CD4-positive, alpha-beta memory T cell (primary cell): ENCODE measurements at regions of chr1 and their contacts with region 1.

Region 1: GRCh38 chr1:247390116-247390791 is 25.7 kb upstream of the NLRP3 start:
- DNase-seq: peak; percentile 84 to 89 (median 86)
- H3K4me3 ChIP-seq: peak overlapping the region in 1 of 2 donors; percentile 34
- H3K4me3 Mint-ChIP-seq: peak overlapping the region; percentile 71 to 88 (median 77)
- H3K27ac ChIP-seq: peak overlapping the region; percentile 36
- H3K27ac Mint-ChIP-seq: peak overlapping the region; percentile 59 to 93 (median 90)
- H3K4me1 ChIP-seq: peaks cover 17% of the 10 kb centered on the region
- H3K4me1 Mint-ChIP-seq: peaks cover 7 to 14% (median 8%) of the 10 kb centered on the region in 4 donors
- H3K27me3 ChIP-seq: no peaks in the 10 kb centered on the region
- H3K27me3 Mint-ChIP-seq: no peaks in the 10 kb centered on the region

Region 2: DNA sequence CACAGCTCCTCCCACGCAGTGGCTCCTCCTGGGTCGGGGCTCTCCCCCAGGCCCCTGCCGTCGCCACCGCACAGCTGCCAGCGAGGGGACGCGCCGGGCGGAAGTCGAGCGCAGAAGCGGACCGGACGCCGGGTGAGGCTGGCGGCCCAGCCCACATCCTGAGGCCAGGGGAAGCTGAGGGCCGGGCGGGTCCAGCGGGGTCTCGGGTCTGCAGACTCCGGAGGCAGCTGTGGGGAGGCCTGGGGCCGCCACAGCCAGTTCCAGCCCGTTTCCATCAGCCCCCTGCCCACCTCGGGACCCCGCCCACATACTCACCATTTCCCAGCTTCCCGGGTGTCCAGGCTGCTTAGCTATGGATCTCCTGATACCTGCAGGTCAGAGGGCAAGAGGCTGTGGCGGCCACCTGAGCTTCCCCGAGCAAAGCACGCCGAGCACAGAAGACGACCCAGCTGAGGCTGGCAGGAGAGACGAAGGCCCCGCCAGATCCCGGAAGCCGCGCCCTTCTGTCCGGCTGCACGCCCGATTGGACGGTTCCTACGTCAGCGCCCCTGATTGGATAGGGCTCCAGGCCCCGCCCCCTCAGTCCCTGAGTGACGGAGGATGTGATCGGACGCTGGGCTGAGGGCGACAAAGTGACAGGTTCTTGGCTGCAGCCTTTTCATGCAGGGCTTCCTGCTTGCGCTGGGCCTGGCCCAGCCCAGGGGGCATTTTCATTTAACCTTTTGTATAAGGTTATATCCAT is 179.7 kb before region 1 on chr1:
- CTCF ChIA-PET with region 1: interaction called, 5 read pairs
- POLR2A ChIA-PET with region 1: interaction called, 3 read pairs
- intact Hi-C with region 1: loop called (anchors 10 kb)
- DNase-seq: peak; percentile 91 to 93 (median 92)
- H3K4me3 ChIP-seq: peak overlapping the region; percentile 66 to 70
- H3K4me3 Mint-ChIP-seq: peak overlapping the region; percentile 94 to 97 (median 95)
- H3K27ac ChIP-seq: peak overlapping the region; percentile 76
- H3K27ac Mint-ChIP-seq: peak overlapping the region; percentile 95 to 97 (median 95)
- H3K4me1 ChIP-seq: peaks cover 70% of the 10 kb centered on the region
- H3K4me1 Mint-ChIP-seq: peaks cover 50 to 74% (median 64%) of the 10 kb centered on the region in 4 donors
- H3K27me3 ChIP-seq: no peaks in the 10 kb centered on the region
- H3K27me3 Mint-ChIP-seq: no peaks in the 10 kb centered on the region

Region 3: GRCh38 chr1:247401310-247402119 is 11.3 kb after region 1 on chr1:
- CTCF ChIA-PET with region 1: interaction called, 15 read pairs
- POLR2A ChIA-PET with region 1: interaction called, 3 read pairs
- intact Hi-C with region 1: no loop called
- DNase-seq: no peak
- H3K4me3 ChIP-seq: no peak overlapping the region
- H3K4me3 Mint-ChIP-seq: no peak overlapping the region
- H3K27ac ChIP-seq: no peak overlapping the region
- H3K27ac Mint-ChIP-seq: no peak overlapping the region
- H3K4me1 ChIP-seq: peaks cover 3% of the 10 kb centered on the region
- H3K4me1 Mint-ChIP-seq: peaks cover under 1 to 10% (median 5%) of the 10 kb centered on the region in 4 donors
- H3K27me3 ChIP-seq: no peaks in the 10 kb centered on the region
- H3K27me3 Mint-ChIP-seq: peaks cover 2 to 6% of the 10 kb centered on the region in 2 donors

Region 4: DNA sequence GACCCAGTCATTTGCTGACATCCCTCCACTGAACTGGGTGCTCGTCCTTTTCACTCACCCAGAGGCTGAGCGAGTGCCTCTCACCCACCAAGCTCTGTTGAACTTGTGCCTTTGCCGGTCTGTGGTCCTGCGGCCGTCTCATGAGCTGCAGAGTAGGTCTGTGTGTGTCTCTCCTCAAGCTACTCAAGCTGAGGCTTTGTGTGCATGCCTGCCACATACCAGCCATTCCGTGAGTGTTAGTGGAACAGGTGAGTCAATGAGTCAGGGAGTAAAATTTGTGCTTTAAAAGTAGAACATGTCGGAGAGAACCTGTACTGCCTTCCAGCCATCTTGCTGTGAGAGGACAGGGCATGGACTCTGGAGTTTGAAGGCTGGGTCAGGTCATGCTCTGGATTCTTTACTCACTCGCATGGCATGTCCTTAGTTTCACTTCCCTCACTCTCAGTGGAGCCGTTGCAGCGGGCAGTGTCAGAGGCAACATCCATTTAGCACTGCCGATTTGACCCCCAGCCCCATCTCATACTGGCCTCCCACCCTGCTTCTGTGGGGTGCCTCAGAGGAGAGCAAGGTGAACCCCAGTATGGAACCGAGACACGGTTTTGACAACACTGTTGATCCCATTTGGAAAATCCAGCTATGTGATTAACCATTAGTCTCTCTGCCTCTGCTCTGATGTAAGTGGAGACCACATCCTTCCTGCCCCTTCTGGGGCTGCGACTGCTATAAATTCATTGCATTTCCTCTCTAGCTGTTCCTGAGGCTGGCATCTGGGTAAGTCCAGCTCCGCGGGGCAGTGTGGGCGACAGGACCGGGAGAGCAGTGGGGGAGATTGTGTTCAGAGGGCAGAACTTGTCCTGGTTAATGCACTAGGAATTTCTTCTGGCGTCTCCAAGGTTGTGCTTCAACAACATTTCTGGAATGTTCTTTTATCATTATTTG is 25.4 kb after region 1 on chr1 and contains the start of gene NLRP3:
- CTCF ChIA-PET with region 1: interaction called, 104 read pairs
- POLR2A ChIA-PET with region 1: interaction called, 50 read pairs
- intact Hi-C with region 1: loop called (anchors 1 kb)
- DNase-seq: peak; percentile 43 to 72 (median 60)
- H3K4me3 ChIP-seq: peak within 1 kb of the TSS; percentile 64 to 70
- H3K4me3 Mint-ChIP-seq: peak within 1 kb of the TSS; percentile 90 to 98 (median 93)
- H3K27ac ChIP-seq: peak within 1 kb of the TSS; percentile 64
- H3K27ac Mint-ChIP-seq: peak within 1 kb of the TSS; percentile 85 to 95 (median 92)
- H3K4me1 ChIP-seq: peaks cover 53% of the 10 kb centered on the region
- H3K4me1 Mint-ChIP-seq: peaks cover 39 to 61% (median 46%) of the 10 kb centered on the region in 4 donors
- H3K27me3 ChIP-seq: no peaks in the 10 kb centered on the region
- H3K27me3 Mint-ChIP-seq: no peaks in the 10 kb centered on the region
- total RNA-seq, gene NLRP3: 13.8 to 14.6 TPM

Region 5: DNA sequence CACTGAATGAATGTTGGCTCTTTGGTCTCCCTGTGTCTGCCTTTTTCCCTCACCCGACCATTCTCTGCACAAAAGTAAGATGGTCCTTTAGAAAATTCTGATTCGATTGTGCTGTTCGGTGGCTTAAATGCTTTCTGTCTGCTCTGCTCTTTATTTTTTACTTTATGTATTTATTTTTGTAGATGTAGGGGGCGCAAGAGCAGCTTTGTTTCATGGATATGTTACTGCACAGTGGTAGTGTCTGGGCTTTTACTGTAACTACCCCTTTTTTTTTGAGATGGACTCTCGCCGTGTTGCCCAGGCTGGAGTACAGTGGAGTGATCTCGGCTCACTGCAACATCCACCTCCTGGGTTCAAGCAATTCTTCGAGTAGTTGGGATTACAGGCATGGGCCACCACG is 41.4 kb after region 1 on chr1:
- CTCF ChIA-PET with region 1: interaction called, 11 read pairs
- POLR2A ChIA-PET with region 1: interaction called, 7 read pairs
- intact Hi-C with region 1: no loop called
- DNase-seq: no peak
- H3K4me3 ChIP-seq: no peak overlapping the region
- H3K4me3 Mint-ChIP-seq: no peak overlapping the region
- H3K27ac ChIP-seq: no peak overlapping the region
- H3K27ac Mint-ChIP-seq: peak overlapping the region in 2 of 7 donors; percentile 11 to 63
- H3K4me1 ChIP-seq: no peaks in the 10 kb centered on the region
- H3K4me1 Mint-ChIP-seq: peaks cover 7 to 16% (median 13%) of the 10 kb centered on the region in 4 donors
- H3K27me3 ChIP-seq: no peaks in the 10 kb centered on the region
- H3K27me3 Mint-ChIP-seq: no peaks in the 10 kb centered on the region

Region 6: GRCh38 chr1:247456914-247457639 is 66.8 kb after region 1 on chr1:
- CTCF ChIA-PET with region 1: interaction called, 10 read pairs
- POLR2A ChIA-PET with region 1: no interaction called
- intact Hi-C with region 1: no loop called
- DNase-seq: no peak
- H3K4me3 ChIP-seq: no peak overlapping the region
- H3K4me3 Mint-ChIP-seq: no peak overlapping the region
- H3K27ac ChIP-seq: no peak overlapping the region
- H3K27ac Mint-ChIP-seq: peak overlapping the region in 4 of 7 donors; percentile 3 to 51 (median 26)
- H3K4me1 ChIP-seq: no peaks in the 10 kb centered on the region
- H3K4me1 Mint-ChIP-seq: peaks cover 0 to 9% (median 3%) of the 10 kb centered on the region in 4 donors
- H3K27me3 ChIP-seq: no peaks in the 10 kb centered on the region
- H3K27me3 Mint-ChIP-seq: peaks cover 9 to 11% of the 10 kb centered on the region in 2 donors

Region 7: GRCh38 chr1:247681288-247681897 is 291.1 kb after region 1 on chr1:
- CTCF ChIA-PET with region 1: no interaction called
- POLR2A ChIA-PET with region 1: no interaction called
- intact Hi-C with region 1: no loop called
- DNase-seq: peak in 3 of 5 donors; percentile 5 to 8 (median 5)
- H3K4me3 ChIP-seq: no peak overlapping the region
- H3K4me3 Mint-ChIP-seq: no peak overlapping the region
- H3K27ac ChIP-seq: no peak overlapping the region
- H3K27ac Mint-ChIP-seq: no peak overlapping the region
- H3K4me1 ChIP-seq: no peaks in the 10 kb centered on the region
- H3K4me1 Mint-ChIP-seq: no peaks in the 10 kb centered on the region
- H3K27me3 ChIP-seq: no peaks in the 10 kb centered on the region
- H3K27me3 Mint-ChIP-seq: peaks cover 2% of the 10 kb centered on the region in 2 donors